ENCODE measurements at regions of chr11 and their contacts with region 1.

Region 1: GRCh38 chr11:74929431-74930363 is 19.2 kb downstream of the XRRA1 start:
- DNase-seq: peak; percentile 59
- ATAC-seq: peak; percentile 97
- H3K4me3 ChIP-seq: no peak overlapping the region
- H3K27ac ChIP-seq: no peak overlapping the region
- H3K4me1 ChIP-seq: no peaks in the 10 kb centered on the region
- H3K27me3 ChIP-seq: no peaks in the 10 kb centered on the region
- CTCF ChIP-seq: peak; percentile 96

Region 2: DNA sequence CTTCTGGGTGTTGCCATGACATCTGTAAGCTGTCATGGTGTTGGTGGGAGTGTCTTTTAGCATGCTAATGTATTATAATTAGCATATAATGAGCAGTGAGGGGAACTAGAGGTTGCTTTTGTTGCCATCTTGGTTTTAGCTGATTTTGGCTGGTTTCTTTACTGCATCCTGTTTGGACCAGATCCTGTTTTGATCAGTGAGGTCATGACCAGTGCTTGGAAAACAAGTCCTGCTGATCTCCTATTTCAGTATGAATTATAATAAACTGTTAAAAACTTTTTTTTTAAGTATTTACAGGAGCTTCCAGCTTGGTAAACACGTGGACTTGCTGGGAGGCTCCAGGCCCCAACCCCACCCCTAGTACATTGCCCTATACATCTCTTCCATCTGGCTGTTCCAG is 587.8 kb before region 1 on chr11:
- CTCF ChIA-PET with region 1: no interaction called
- POLR2A ChIA-PET with region 1: no interaction called
- in situ Hi-C with region 1: no loop called
- intact Hi-C with region 1: no loop called
- DNase-seq: no peak
- ATAC-seq: no peak
- H3K4me3 ChIP-seq: no peak overlapping the region
- H3K27ac ChIP-seq: no peak overlapping the region
- H3K4me1 ChIP-seq: no peaks in the 10 kb centered on the region
- H3K27me3 ChIP-seq: no peaks in the 10 kb centered on the region
- CTCF ChIP-seq: no peak

Region 3: DNA sequence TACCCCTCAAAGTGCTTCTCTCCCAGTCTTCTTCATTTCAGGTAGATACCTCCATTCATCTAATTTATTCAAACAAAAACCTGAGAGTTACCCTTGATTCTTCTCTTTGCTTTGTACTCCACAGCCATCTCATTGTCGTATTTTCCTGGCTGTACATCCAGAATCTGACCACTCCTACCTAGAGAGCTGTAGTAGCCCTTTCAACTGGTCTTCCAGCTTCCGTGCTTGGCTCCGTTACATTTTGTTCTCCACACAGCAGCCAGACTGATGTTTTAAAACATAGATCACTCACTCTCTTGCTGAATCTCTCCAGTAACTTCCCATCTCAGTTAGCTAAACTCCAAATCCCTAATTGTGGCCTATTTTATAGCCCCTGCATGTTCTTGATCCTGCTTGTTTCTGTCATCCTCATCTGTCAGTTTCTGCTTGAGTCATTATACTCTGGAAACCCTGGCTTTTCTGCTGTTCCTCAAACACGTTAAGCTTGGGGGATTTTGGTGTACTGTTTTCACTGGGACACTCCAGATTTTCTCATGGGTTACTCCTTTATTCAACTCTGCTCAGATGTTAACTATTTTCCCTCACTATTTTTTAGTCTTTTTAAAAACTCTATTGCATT is 26.8 kb after region 1 on chr11:
- CTCF ChIA-PET with region 1: no interaction called
- POLR2A ChIA-PET with region 1: interaction called, 10 read pairs
- in situ Hi-C with region 1: no loop called
- intact Hi-C with region 1: no loop called
- DNase-seq: no peak
- ATAC-seq: no peak
- H3K4me3 ChIP-seq: no peak overlapping the region
- H3K27ac ChIP-seq: no peak overlapping the region
- H3K4me1 ChIP-seq: 0 out of 2 replicates have a peak, but pooled peaks cover 2% of the 10 kb centered on the region
- H3K27me3 ChIP-seq: no peaks in the 10 kb centered on the region
- CTCF ChIP-seq: no peak

Region 4: DNA sequence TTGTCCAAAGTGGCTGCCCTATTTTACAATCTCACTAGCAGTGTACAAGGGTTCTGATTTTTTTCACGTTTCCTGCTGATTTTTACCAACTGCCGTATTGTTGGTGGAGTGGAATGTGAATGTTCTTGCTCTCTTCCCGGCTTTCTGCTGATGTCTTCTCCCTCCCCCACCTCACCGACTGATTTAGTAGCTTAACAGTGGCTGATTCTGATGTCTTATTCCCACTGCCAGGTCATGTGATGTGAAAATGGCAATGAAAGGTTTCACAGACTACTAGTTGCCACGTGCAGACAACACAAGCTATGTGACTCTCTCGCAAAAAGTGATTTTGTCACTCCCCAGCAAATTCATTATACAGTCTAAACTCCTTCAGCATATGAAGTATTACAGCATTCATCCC is 41.7 kb after region 1 on chr11:
- CTCF ChIA-PET with region 1: no interaction called
- POLR2A ChIA-PET with region 1: no interaction called
- in situ Hi-C with region 1: no loop called
- intact Hi-C with region 1: loop called (anchors 1 kb)
- DNase-seq: no peak
- ATAC-seq: no peak
- H3K4me3 ChIP-seq: no peak overlapping the region
- H3K27ac ChIP-seq: no peak overlapping the region
- H3K4me1 ChIP-seq: no peaks in the 10 kb centered on the region
- H3K27me3 ChIP-seq: no peaks in the 10 kb centered on the region
- CTCF ChIP-seq: no peak

Region 5: GRCh38 chr11:74988541-74989260 is 59.0 kb after region 1 on chr11 and contains the start of gene NEU3:
- CTCF ChIA-PET with region 1: interaction called, 18 read pairs
- POLR2A ChIA-PET with region 1: no interaction called
- in situ Hi-C with region 1: no loop called
- intact Hi-C with region 1: no loop called
- DNase-seq: peak; percentile 41
- ATAC-seq: peak; percentile 98
- H3K4me3 ChIP-seq: peak within 1 kb of the TSS; percentile 98 to 99
- H3K27ac ChIP-seq: peak within 1 kb of the TSS; percentile 97
- H3K4me1 ChIP-seq: peaks cover 22% of the 10 kb centered on the region
- H3K27me3 ChIP-seq: no peaks in the 10 kb centered on the region
- CTCF ChIP-seq: no peak
- total RNA-seq, gene NEU3: 29.0 TPM

Region 6: DNA sequence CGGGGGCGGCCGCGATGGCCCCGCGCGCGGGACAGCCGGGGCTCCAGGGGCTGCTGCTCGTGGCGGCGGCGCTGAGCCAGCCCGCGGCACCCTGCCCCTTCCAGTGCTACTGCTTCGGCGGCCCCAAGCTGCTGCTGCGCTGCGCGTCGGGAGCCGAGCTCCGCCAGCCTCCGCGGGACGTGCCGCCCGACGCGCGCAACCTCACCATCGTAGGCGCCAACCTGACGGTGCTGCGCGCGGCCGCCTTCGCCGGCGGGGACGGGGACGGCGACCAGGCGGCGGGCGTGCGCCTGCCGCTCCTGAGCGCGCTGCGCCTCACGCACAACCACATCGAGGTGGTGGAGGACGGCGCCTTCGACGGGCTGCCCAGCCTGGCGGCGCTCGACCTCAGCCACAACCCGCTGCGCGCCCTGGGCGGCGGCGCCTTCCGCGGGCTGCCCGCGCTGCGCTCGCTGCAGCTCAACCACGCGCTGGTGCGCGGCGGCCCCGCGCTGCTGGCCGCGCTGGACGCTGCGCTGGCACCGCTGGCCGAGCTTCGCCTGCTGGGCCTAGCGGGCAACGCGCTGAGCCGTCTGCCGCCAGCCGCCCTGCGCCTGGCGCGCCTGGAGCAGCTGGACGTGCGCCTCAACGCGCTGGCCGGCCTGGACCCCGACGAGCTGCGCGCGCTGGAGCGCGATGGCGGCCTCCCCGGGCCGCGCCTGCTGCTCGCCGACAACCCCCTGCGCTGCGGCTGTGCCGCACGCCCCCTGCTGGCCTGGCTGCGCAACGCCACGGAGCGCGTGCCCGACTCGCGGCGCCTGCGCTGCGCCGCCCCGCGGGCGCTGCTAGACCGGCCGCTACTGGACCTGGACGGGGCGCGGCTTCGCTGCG is 311.6 kb after region 1 on chr11:
- CTCF ChIA-PET with region 1: interaction called, 4 read pairs
- POLR2A ChIA-PET with region 1: no interaction called
- in situ Hi-C with region 1: no loop called
- intact Hi-C with region 1: loop called (anchors 10 kb)
- DNase-seq: peak; percentile 60
- ATAC-seq: peak; percentile 92
- H3K4me3 ChIP-seq: peak overlapping the region; percentile 42 to 53
- H3K27ac ChIP-seq: no peak overlapping the region
- H3K4me1 ChIP-seq: no peaks in the 10 kb centered on the region
- H3K27me3 ChIP-seq: no peaks in the 10 kb centered on the region; the same call in 1 of the 2 replicates
- CTCF ChIP-seq: peak; percentile 100

Region 7: GRCh38 chr11:75380711-75381420 is 451.2 kb after region 1 on chr11:
- CTCF ChIA-PET with region 1: no interaction called
- POLR2A ChIA-PET with region 1: no interaction called
- in situ Hi-C with region 1: no loop called
- intact Hi-C with region 1: no loop called
- DNase-seq: no peak
- ATAC-seq: 0 out of 2 replicates have a peak, but pooled peaks have one; percentile 27
- H3K4me3 ChIP-seq: no peak overlapping the region
- H3K27ac ChIP-seq: peak overlapping the region; percentile 74
- H3K4me1 ChIP-seq: peaks cover 36% of the 10 kb centered on the region
- H3K27me3 ChIP-seq: no peaks in the 10 kb centered on the region
- CTCF ChIP-seq: no peak